Activated T-helper 2 cell treated with anti-CD3 and anti-CD28 coated beads, Interferon-gamma antibody, Interleukin-2, Interleukin-4, amounts not matched to agents 10 μg/mL and 5 μg/mL and 100 μg/mL, durations not matched to agents 14 hours and 24 hours and 36 hours (primary cell): ENCODE measurements at regions of chr16 and their contacts with region 1.

Region 1: GRCh38 chr16:77584205-77584859 is 138.0 kb upstream of the NUDT7 start:
- DNase-seq: peak; percentile 11
- H3K4me3 Mint-ChIP-seq: no peak overlapping the region
- H3K27ac Mint-ChIP-seq: no peak overlapping the region
- H3K4me1 Mint-ChIP-seq: peaks cover 16% of the 10 kb centered on the region
- H3K27me3 Mint-ChIP-seq: peaks cover 2% of the 10 kb centered on the region

Region 2: GRCh38 chr16:77376358-77376757 is 208.0 kb before region 1 on chr16:
- intact Hi-C with region 1: loop called (anchors 1 kb)
- DNase-seq: no peak
- H3K4me3 Mint-ChIP-seq: no peak overlapping the region
- H3K27ac Mint-ChIP-seq: no peak overlapping the region
- H3K4me1 Mint-ChIP-seq: no peaks in the 10 kb centered on the region
- H3K27me3 Mint-ChIP-seq: no peaks in the 10 kb centered on the region

Region 3: GRCh38 chr16:77499373-77500285 is 84.7 kb before region 1 on chr16:
- intact Hi-C with region 1: no loop called
- DNase-seq: no peak
- H3K4me3 Mint-ChIP-seq: no peak overlapping the region
- H3K27ac Mint-ChIP-seq: no peak overlapping the region
- H3K4me1 Mint-ChIP-seq: no peaks in the 10 kb centered on the region
- H3K27me3 Mint-ChIP-seq: no peaks in the 10 kb centered on the region

Region 4: DNA sequence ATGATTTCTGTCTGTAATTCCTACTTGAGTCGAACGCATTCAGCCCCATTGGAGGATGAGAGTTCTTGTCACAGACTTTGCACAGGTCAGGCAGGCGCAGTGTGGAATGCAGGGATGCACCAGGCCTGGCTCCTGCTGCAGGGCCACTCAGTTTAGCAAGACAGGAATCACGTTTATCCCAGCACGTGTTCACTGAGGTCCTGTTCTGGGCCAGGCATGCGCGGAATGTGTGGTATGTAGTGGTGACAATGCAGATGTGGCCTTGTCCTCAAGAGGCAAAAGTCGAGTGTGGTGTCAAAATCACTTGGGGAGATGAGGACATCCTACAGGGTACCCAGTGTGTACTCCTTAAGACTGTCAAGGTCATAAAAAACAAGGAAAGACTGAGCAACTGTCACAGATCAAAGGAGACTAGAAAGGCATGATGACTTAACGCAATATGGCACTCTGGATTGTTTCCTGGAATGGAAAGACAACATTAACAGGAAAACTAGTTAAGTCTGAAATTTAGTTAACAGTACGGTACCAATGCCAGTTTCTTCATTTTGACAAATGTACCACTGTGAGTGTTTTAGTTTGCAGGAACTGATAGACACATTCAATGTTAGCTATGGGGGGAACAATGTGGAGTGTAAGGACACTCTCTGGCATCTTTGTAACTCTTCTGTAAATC is 28.0 kb before region 1 on chr16:
- intact Hi-C with region 1: no loop called
- DNase-seq: no peak
- H3K4me3 Mint-ChIP-seq: no peak overlapping the region
- H3K27ac Mint-ChIP-seq: no peak overlapping the region
- H3K4me1 Mint-ChIP-seq: no peaks in the 10 kb centered on the region
- H3K27me3 Mint-ChIP-seq: peaks cover 3% of the 10 kb centered on the region